Activated CD4-positive, alpha-beta memory T cell treated with anti-CD3 and anti-CD28 coated beads for 36 hours (primary cell): ENCODE measurements at regions of chr15 and their contacts with region 1.

Region 1: GRCh38 chr15:38283010-38283409 is 30.4 kb downstream of the SPRED1 start:
- DNase-seq: no peak
- H3K4me3 Mint-ChIP-seq: no peak overlapping the region
- H3K27ac Mint-ChIP-seq: no peak overlapping the region
- H3K4me1 Mint-ChIP-seq: no peaks in the 10 kb centered on the region
- H3K27me3 Mint-ChIP-seq: peaks cover 18% of the 10 kb centered on the region

Region 2: GRCh38 chr15:38217191-38217595 is 65.8 kb before region 1 on chr15:
- CTCF ChIA-PET with region 1: no interaction called
- POLR2A ChIA-PET with region 1: no interaction called
- intact Hi-C with region 1: loop called (anchors 5 kb)
- DNase-seq: no peak
- H3K4me3 Mint-ChIP-seq: no peak overlapping the region
- H3K27ac Mint-ChIP-seq: no peak overlapping the region
- H3K4me1 Mint-ChIP-seq: peaks cover 3% of the 10 kb centered on the region
- H3K27me3 Mint-ChIP-seq: peaks cover 3% of the 10 kb centered on the region

Region 3: GRCh38 chr15:38229705-38230310 is 53.2 kb before region 1 on chr15:
- CTCF ChIA-PET with region 1: no interaction called
- POLR2A ChIA-PET with region 1: no interaction called
- intact Hi-C with region 1: no loop called
- DNase-seq: no peak
- H3K4me3 Mint-ChIP-seq: no peak overlapping the region
- H3K27ac Mint-ChIP-seq: no peak overlapping the region
- H3K4me1 Mint-ChIP-seq: no peaks in the 10 kb centered on the region
- H3K27me3 Mint-ChIP-seq: peaks cover 2% of the 10 kb centered on the region